ENCODE measurements at regions of chr11 and their contacts with region 1.

Region 1: DNA sequence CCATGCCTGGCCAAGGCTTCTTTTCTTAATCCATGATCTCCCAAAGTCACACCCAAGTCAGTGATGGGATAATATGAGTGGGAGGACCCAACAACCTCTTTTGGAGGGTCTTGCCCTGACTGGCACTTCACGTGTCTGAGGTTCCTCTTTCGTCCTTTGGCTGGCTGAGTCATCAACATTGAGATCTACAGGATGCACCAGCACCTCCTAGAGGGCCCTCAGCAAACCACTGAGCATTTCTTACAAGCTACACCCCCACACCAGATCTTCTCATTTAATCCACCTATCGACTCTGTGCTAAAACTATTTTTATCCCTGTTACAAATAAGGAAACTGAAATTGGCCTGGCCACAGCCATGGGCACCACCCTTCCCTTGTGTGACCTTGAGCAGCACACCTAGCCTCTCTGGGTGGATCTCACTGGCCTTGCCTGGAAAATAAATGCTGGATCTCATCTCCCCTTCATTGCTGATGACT is 63.4 kb downstream of the FLI1 start:
- DNase-seq: peak; percentile 48 to 90 (median 71)
- ATAC-seq: peak; percentile 99
- H3K4me3 ChIP-seq: no peak overlapping the region
- H3K4me3 Mint-ChIP-seq: peak overlapping the region; percentile 35
- H3K27ac ChIP-seq: peak overlapping the region in 1 of 2 experiments; percentile 30
- H3K27ac Mint-ChIP-seq: peak overlapping the region; percentile 88
- H3K4me1 ChIP-seq: peaks cover 67% of the 10 kb centered on the region
- H3K4me1 Mint-ChIP-seq: peaks cover 89% of the 10 kb centered on the region
- H3K27me3 ChIP-seq: no peaks in the 10 kb centered on the region
- H3K27me3 Mint-ChIP-seq: no peaks in the 10 kb centered on the region
- CTCF ChIP-seq: peak; percentile 76

Region 2: DNA sequence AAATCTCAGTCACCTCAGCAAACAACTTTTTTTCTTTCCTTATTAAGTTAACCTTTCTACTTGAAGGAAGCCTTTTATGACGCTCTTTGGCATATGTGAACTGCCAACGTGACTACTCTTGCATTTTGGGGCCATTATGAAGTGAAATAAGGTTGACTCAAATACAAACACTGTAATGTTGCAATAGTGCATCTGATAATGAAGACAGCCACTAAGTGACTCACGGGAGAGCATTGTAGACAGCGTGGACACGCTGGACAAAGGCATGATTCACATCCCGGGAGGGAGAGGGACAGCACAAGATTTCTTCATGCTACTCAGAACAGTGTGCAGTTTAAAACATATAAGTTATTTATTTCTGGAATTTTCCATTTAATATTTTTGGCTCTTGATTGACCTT is 730.7 kb before region 1 on chr11:
- CTCF ChIA-PET with region 1: no interaction called
- POLR2A ChIA-PET with region 1: no interaction called
- intact Hi-C with region 1: loop called (anchors 1 to 5 kb)
- DNase-seq: no peak
- ATAC-seq: no peak
- H3K4me3 ChIP-seq: no peak overlapping the region
- H3K4me3 Mint-ChIP-seq: no peak overlapping the region
- H3K27ac ChIP-seq: no peak overlapping the region
- H3K27ac Mint-ChIP-seq: no peak overlapping the region
- H3K4me1 ChIP-seq: no peaks in the 10 kb centered on the region
- H3K4me1 Mint-ChIP-seq: peaks cover 2% of the 10 kb centered on the region
- H3K27me3 ChIP-seq: no peaks in the 10 kb centered on the region
- H3K27me3 Mint-ChIP-seq: peaks cover 5% of the 10 kb centered on the region
- CTCF ChIP-seq: no peak

Region 3: GRCh38 chr11:128472128-128473089 is 284.9 kb before region 1 on chr11:
- CTCF ChIA-PET with region 1: no interaction called
- POLR2A ChIA-PET with region 1: no interaction called
- intact Hi-C with region 1: loop called in 1 of 2 experiments (anchors 5 kb)
- DNase-seq: peak in 5 of 9 experiments; percentile 46 to 81 (median 63)
- ATAC-seq: peak; percentile 33
- H3K4me3 ChIP-seq: peak overlapping the region; percentile 4 to 33
- H3K4me3 Mint-ChIP-seq: peak overlapping the region; percentile 74
- H3K27ac ChIP-seq: peak overlapping the region; percentile 68 to 88
- H3K27ac Mint-ChIP-seq: peak overlapping the region; percentile 94
- H3K4me1 ChIP-seq: peaks cover 99% of the 10 kb centered on the region
- H3K4me1 Mint-ChIP-seq: peaks cover 99% of the 10 kb centered on the region
- H3K27me3 ChIP-seq: no peaks in the 10 kb centered on the region
- H3K27me3 Mint-ChIP-seq: no peaks in the 10 kb centered on the region
- CTCF ChIP-seq: no peak

Region 4: DNA sequence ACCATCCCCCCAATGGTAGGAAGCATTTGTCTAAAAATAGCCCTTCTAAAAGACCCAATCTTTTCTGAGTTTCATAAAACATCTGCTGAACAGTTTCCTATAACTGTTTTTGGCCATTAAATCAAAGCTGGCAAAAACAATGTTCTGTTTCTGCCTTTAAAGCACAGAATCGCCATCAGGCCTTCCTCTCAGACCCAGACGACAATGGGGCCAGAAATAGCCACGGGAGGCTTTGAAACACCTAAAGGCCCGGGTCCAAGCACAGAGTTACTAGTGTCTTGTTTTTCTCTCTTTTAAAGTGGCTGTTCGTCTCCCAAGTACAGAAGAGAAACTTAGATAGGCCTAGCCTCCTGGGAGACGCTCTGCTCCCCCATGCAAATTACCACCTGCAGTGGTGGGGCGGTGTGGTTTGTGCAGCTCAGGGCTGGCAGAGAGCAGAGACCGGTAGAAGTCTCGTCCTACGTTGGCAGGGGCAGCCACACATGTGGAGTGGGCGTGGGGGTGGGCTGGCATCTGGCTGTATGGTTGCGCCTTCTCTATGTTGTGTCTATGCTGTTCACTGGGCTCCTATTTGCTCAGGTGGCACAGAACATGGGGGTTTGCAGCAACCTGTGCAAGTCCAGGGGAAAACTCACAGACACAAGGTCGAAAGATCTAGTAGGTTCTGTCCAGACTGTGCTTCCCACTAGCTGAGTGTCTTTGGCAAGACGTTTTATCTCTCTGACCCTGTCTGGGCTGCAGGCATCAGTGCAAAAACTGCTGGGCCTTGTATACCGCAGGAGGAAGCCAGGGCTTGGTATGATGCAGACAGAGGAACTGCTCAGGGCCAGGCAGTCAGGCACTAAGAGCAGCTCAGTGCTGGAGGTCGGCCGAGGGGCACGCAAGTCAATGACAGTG is 146.3 kb before region 1 on chr11:
- CTCF ChIA-PET with region 1: no interaction called
- POLR2A ChIA-PET with region 1: no interaction called
- intact Hi-C with region 1: no loop called
- DNase-seq: peak; percentile 50 to 87 (median 74)
- ATAC-seq: peak; percentile 88
- H3K4me3 ChIP-seq: peak overlapping the region in 1 of 2 experiments; percentile 9
- H3K4me3 Mint-ChIP-seq: peak overlapping the region; percentile 57
- H3K27ac ChIP-seq: peak overlapping the region; percentile 50 to 70
- H3K27ac Mint-ChIP-seq: peak overlapping the region; percentile 92
- H3K4me1 ChIP-seq: peaks cover 63% of the 10 kb centered on the region
- H3K4me1 Mint-ChIP-seq: peaks cover 87% of the 10 kb centered on the region
- H3K27me3 ChIP-seq: no peaks in the 10 kb centered on the region
- H3K27me3 Mint-ChIP-seq: no peaks in the 10 kb centered on the region
- CTCF ChIP-seq: no peak

Region 5: GRCh38 chr11:128653801-128654231 is 103.5 kb before region 1 on chr11:
- CTCF ChIA-PET with region 1: interaction called, 3 read pairs
- POLR2A ChIA-PET with region 1: no interaction called
- intact Hi-C with region 1: loop called in 1 of 2 experiments (anchors 5 kb)
- DNase-seq: no peak
- ATAC-seq: no peak
- H3K4me3 ChIP-seq: no peak overlapping the region
- H3K4me3 Mint-ChIP-seq: no peak overlapping the region
- H3K27ac ChIP-seq: no peak overlapping the region
- H3K27ac Mint-ChIP-seq: no peak overlapping the region
- H3K4me1 ChIP-seq: no peaks in the 10 kb centered on the region
- H3K4me1 Mint-ChIP-seq: peaks cover 3% of the 10 kb centered on the region
- H3K27me3 ChIP-seq: peaks cover 0 to 2% of the 10 kb centered on the region in 2 experiments
- H3K27me3 Mint-ChIP-seq: peaks cover 4% of the 10 kb centered on the region
- CTCF ChIP-seq: no peak

Region 6: DNA sequence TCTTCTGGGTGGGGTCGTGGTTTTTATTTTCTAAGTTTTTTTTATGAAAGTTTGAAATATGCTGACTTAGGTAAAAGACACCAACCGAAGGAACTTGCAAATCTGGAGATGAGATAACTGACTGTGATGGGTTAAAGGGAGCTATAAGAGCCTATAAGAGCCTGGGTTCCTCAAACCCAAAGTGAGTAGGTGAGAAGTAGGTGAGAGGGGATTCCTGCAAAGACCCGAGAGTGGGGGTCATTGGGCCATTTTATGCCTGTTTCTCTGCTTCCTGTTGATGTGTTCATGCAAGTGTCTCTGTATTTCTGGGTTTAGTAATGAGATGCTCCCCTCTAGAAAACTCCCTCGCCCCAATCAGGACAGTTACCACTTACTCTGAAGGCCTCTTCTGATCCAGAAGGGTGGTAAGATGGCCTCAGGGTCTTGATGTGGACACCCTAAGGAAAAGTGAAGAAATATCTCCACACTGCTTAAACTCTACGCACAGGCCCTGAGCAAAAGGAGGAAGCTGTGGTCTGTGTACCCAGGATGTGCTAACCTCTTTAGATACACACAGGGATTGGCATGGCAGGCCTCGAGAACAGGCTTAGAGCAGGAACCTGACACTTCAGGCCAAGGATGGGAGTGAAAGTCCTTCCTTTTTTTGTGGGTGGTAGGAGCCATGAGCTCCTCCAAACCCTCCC is 61.6 kb before region 1 on chr11:
- CTCF ChIA-PET with region 1: interaction called, 6 read pairs
- POLR2A ChIA-PET with region 1: interaction called, 3 read pairs
- intact Hi-C with region 1: loop called (anchors 1 to 10 kb)
- DNase-seq: peak in 6 of 9 experiments; percentile 29 to 78 (median 54)
- ATAC-seq: peak; percentile 47
- H3K4me3 ChIP-seq: peak overlapping the region; percentile 93 to 95
- H3K4me3 Mint-ChIP-seq: peak overlapping the region; percentile 98
- H3K27ac ChIP-seq: peak overlapping the region; percentile 80 to 89
- H3K27ac Mint-ChIP-seq: peak overlapping the region; percentile 98
- H3K4me1 ChIP-seq: peaks cover 54% of the 10 kb centered on the region
- H3K4me1 Mint-ChIP-seq: peaks cover 58% of the 10 kb centered on the region
- H3K27me3 ChIP-seq: no peaks in the 10 kb centered on the region
- H3K27me3 Mint-ChIP-seq: no peaks in the 10 kb centered on the region
- CTCF ChIP-seq: no peak

Region 7: DNA sequence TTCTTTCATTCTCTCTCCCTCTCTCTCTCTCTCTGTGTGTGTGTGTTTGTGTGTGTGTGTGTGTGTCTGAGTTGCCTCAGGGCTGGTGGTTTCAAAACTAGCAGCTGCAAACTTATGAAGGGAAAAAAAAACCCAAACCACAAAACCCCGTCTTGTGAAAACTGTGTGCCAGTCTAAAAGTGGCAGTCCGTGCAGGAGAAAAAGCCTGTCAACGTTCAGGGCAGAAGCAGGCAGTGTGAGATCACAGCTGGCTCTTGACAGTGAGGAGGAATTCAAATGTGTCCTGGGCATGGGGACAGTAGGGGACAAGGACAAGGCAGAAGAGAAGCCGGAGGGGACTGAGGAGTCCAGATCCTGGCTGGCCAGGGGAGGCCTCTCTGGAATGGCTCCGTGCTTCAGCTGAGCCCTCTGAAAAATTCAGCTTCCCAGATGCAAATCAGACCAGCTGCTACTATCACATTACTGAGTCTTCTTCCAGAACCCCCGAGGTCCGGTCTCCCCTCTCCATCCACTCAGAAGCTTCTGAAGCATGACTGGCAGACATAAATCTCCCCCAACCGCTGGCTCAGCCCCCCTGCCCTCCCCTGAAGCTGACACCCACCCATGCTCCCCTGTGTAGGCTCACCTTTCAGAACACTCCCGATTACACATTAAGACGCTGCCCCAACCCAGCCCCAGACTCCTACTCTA is 31.5 kb before region 1 on chr11:
- CTCF ChIA-PET with region 1: interaction called, 5 read pairs
- POLR2A ChIA-PET with region 1: no interaction called
- intact Hi-C with region 1: loop called in 1 of 2 experiments (anchors 1 kb)
- DNase-seq: peak; percentile 19 to 95 (median 67)
- ATAC-seq: peak; percentile 56
- H3K4me3 ChIP-seq: peak overlapping the region; percentile 16 to 25
- H3K4me3 Mint-ChIP-seq: peak overlapping the region; percentile 87
- H3K27ac ChIP-seq: peak overlapping the region; percentile 6 to 69
- H3K27ac Mint-ChIP-seq: peak overlapping the region; percentile 89
- H3K4me1 ChIP-seq: peaks cover 99% of the 10 kb centered on the region
- H3K4me1 Mint-ChIP-seq: peaks cover 98% of the 10 kb centered on the region
- H3K27me3 ChIP-seq: no peaks in the 10 kb centered on the region
- H3K27me3 Mint-ChIP-seq: no peaks in the 10 kb centered on the region
- CTCF ChIP-seq: no peak

Region 8: DNA sequence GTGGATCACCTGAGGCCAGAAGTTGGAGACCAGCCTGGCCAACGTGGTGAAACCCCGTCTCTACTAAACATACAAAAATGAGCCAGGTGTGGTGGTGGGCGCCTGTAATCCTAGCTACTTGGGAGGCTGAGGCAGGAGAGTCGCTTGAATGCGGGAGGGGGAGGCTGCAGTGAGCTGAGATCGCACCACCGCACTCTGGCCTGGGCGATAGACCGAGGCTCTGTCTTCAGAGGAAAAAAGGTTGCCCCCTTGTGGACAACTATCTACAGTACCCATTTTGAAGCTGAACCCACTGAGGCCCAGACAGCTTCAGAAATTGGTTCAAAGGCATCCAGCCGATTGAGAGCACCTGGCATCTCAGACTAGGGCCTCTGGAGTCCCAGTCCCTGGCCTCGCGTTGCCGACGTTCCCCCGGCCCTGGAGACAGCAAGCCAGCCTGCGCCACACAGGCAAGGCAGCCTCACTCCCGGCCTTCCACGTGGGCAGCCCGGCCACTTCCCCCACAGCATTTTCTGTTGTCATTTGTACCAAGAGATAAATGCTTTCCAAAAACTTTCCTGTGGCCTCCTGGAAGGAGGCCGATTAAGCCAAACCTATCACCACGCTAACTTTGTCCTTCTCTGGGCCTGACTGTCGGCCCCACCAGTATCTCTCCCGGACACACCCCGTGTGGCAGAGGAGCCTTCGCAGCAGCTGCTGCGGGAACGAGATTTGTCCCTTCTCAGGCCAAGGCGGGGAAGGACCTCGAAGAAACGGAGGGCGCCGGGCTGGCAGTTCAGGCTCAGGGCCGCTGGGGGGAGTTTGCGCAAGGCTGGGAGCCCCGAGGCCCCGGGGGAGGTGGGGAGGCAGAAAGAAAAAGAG is 19.4 kb after region 1 on chr11:
- CTCF ChIA-PET with region 1: interaction called, 10 read pairs
- POLR2A ChIA-PET with region 1: interaction called, 4 read pairs
- intact Hi-C with region 1: no loop called
- DNase-seq: peak in 6 of 9 experiments; percentile 27 to 79 (median 50)
- ATAC-seq: peak; percentile 57
- H3K4me3 ChIP-seq: no peak overlapping the region
- H3K4me3 Mint-ChIP-seq: no peak overlapping the region
- H3K27ac ChIP-seq: peak overlapping the region in 1 of 2 experiments; percentile 53
- H3K27ac Mint-ChIP-seq: peak overlapping the region; percentile 75
- H3K4me1 ChIP-seq: peaks cover 32% of the 10 kb centered on the region
- H3K4me1 Mint-ChIP-seq: peaks cover 71% of the 10 kb centered on the region
- H3K27me3 ChIP-seq: no peaks in the 10 kb centered on the region
- H3K27me3 Mint-ChIP-seq: no peaks in the 10 kb centered on the region
- CTCF ChIP-seq: peak; percentile 37

Region 9: GRCh38 chr11:129391821-129392220 is 634.5 kb after region 1 on chr11:
- CTCF ChIA-PET with region 1: no interaction called
- POLR2A ChIA-PET with region 1: no interaction called
- intact Hi-C with region 1: no loop called
- DNase-seq: no peak
- ATAC-seq: no peak
- H3K4me3 ChIP-seq: no peak overlapping the region
- H3K4me3 Mint-ChIP-seq: no peak overlapping the region
- H3K27ac ChIP-seq: no peak overlapping the region
- H3K27ac Mint-ChIP-seq: no peak overlapping the region
- H3K4me1 ChIP-seq: no peaks in the 10 kb centered on the region
- H3K4me1 Mint-ChIP-seq: no peaks in the 10 kb centered on the region
- H3K27me3 ChIP-seq: peaks cover 0 to 2% of the 10 kb centered on the region in 2 experiments
- H3K27me3 Mint-ChIP-seq: peaks cover 20% of the 10 kb centered on the region
- CTCF ChIP-seq: no peak

Measured in CD8-positive, alpha-beta T cell (primary cell).